Activated T-helper 1 cell treated with anti-CD3 and anti-CD28 coated beads, Interleukin-12 subunit alpha, Interleukin-12 subunit beta, Interleukin-2, Interleukin-4 antibody, amounts not matched to agents 30 ng/mL and 10 ng/mL and 1 ng/mL, durations not matched to agents 14 hours and 24 hours and 36 hours (primary cell): ENCODE measurements at regions of chr1 and their contacts with region 1.

Region 1: GRCh38 chr1:65393347-65393746 is 27.1 kb upstream of the LEPR start:
- DNase-seq: peak; percentile 30
- H3K4me3 Mint-ChIP-seq: peak overlapping the region; percentile 35
- H3K27ac Mint-ChIP-seq: peak overlapping the region; percentile 70
- H3K4me1 Mint-ChIP-seq: peaks cover 96% of the 10 kb centered on the region
- H3K27me3 Mint-ChIP-seq: no peaks in the 10 kb centered on the region

Region 2: DNA sequence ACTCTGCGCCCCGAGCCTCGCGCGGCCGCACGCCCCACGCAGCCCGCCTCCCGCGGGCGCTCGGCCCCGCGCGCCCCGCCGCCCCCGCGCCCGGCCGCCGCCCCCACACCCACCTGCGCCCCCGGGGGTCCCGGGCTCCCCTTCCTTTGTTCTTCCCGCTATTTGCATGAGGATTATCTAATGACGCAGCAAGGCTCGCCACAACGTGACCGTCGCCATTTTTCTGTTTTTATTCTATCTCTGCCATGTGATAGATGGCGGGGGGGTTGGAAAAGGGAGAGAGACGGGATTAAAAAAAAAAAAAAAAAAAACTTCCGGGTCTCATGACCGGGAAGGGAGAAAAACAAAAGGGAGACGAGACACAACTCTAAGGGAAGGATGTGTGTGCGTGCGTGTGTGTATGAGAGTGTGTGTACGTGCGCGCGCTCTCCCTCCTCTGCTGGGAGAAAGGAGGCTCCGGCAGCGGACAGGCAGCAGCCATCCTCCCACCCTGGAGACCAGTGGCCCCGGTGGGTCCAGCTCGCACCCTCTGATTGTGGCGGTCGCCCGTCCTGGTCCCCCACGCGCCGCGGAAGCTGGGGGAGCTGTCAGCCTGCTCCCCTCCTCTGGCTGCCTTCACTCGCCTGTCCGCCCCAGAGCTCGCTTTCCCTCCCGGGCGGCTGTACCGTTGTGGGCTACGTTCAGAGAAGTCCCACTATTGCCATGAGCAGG is 325.7 kb before region 1 on chr1:
- intact Hi-C with region 1: loop called (anchors 10 kb)
- DNase-seq: peak; percentile 25
- H3K4me3 Mint-ChIP-seq: peak overlapping the region; percentile 89
- H3K27ac Mint-ChIP-seq: peak overlapping the region; percentile 95
- H3K4me1 Mint-ChIP-seq: peaks cover 41% of the 10 kb centered on the region
- H3K27me3 Mint-ChIP-seq: no peaks in the 10 kb centered on the region

Region 3: GRCh38 chr1:65230731-65231481 is 162.4 kb before region 1 on chr1:
- intact Hi-C with region 1: loop called (anchors 1 kb)
- DNase-seq: no peak
- H3K4me3 Mint-ChIP-seq: no peak overlapping the region
- H3K27ac Mint-ChIP-seq: peak overlapping the region; percentile 81
- H3K4me1 Mint-ChIP-seq: peaks cover 32% of the 10 kb centered on the region
- H3K27me3 Mint-ChIP-seq: no peaks in the 10 kb centered on the region

Region 4: DNA sequence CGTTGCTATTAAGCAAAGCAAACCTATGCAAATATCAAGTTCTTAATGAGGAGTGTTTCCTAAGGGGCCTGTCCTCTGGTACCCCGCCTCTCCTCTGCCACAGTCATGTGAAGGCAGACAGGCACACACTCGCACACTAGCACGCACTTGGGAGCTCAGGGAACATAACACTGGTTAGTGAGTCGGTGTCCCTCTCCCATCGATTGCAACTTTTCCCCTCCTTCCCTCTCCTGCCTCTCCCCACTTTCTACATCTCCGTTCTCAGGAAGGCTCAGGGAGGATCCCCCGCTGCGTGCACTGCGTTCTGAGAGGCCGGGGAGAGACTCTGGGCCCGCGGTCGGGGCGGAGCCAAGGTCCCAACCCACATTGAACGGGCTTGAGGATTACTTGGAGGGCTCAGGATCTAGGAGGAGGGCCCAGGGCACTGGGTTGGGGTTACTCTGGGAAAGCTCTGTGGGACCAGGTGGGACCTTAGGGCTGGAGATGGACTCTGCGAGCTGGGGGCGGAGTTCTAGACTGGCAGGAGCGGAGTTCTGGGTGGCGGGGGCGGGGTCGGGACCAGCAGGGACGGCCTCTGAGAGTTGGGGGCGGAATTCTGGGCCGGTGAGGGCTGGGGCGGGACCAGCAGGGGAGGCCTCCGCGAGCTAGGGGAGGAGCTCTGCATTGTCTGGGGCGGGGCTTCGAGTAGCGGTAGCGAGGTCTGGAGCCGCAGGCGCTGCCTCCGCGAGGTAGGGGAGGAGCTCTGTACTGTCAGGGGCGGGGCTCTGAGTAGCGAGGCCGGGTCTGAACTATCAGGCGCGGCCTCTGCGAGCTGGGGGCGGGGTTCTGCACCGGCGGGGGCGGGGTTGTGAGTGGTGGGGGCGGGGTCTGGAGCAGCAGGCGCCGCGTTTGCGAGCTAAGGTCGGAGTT is 26.6 kb after region 1 on chr1:
- intact Hi-C with region 1: loop called (anchors 1 kb)
- DNase-seq: peak; percentile 98
- H3K4me3 Mint-ChIP-seq: no peak overlapping the region
- H3K27ac Mint-ChIP-seq: peak overlapping the region; percentile 90
- H3K4me1 Mint-ChIP-seq: peaks cover 32% of the 10 kb centered on the region
- H3K27me3 Mint-ChIP-seq: peaks cover 5% of the 10 kb centered on the region

Region 5: DNA sequence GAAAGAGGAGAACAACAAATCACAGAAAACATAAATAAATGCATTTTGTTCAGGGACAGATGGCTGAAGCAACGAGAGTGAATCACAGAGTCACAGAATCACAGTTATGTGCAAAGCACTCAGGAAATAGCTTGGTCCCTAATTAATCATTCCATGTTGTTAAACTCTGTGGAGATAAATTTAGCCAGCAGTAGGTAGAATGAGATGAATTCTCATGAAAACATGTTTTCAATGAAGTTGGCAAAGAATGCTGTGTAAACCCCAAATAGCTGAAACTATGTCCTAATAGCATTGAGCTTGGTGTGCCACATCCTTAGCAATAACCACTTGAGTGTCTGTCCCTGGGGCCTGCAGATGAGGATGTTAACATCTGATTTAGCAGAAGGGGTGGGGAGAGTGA is 47.6 kb after region 1 on chr1:
- intact Hi-C with region 1: no loop called
- DNase-seq: no peak
- H3K4me3 Mint-ChIP-seq: no peak overlapping the region
- H3K27ac Mint-ChIP-seq: no peak overlapping the region
- H3K4me1 Mint-ChIP-seq: no peaks in the 10 kb centered on the region
- H3K27me3 Mint-ChIP-seq: no peaks in the 10 kb centered on the region

Region 6: DNA sequence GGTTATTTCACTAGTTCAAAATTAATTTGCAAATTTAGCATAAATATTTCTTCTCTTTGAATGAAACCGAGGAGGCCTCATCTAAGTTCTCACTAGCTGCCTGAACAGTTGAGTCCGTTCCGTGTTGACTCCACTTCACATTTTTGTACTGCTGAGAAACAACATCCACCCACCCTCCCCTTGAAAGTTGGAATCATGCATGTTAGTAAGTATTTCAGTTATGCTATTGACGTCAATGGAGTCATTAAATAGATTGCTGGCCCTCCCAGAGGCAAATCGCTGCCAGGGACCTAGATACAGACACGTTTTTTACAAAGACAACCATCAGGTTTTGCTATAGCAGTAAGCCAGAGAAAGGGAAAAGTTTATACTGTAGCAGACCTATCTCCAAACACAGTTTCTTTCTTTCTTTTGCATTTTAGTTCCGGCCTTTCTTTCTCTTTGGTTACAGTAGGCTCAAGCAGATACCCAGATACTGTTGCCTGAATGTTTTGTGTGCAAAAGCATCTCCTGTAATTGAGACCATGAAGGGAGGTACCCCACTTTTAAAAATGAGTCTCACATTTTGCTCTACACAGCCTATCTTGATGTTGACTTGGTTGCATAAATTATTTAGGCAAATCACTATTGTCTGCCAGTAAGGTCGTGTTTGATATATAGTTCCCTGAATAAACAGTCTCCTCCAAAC is 878.0 kb after region 1 on chr1:
- intact Hi-C with region 1: loop called (anchors 10 kb)
- DNase-seq: no peak
- H3K4me3 Mint-ChIP-seq: peak overlapping the region; percentile 38
- H3K27ac Mint-ChIP-seq: peak overlapping the region; percentile 85
- H3K4me1 Mint-ChIP-seq: peaks cover 67% of the 10 kb centered on the region
- H3K27me3 Mint-ChIP-seq: peaks cover 2% of the 10 kb centered on the region

Region 7: DNA sequence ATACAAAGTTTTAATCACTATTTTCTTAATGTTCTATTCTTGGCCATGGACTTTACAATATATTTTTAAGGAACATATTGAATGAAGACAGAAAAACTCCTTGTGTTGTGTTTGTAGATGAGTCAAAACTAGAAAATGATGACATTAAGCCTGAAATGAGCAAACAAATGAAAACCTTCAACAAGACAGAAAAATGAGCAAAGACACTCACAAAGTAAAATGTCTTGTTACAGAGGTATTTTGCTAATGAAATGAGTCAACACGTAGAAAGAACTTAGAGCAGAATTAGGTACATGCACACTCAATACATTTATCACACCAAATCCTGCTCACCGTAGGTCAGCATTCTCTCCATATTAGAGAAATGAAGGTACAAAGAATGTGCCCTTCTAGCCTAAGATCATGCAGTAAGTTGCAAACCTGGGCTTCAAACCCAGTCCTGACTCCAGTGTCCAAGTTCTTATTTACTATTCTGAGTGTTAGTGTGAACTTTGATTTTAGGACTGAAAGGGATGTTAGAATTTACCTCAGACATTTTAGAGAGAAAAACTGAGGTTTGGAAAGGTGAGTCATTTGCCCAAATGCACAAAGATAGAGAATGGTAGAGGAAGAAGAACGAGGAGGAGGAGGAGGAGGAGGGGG is 1006.7 kb after region 1 on chr1:
- intact Hi-C with region 1: loop called (anchors 1 kb)
- DNase-seq: no peak
- H3K4me3 Mint-ChIP-seq: peak overlapping the region; percentile 67
- H3K27ac Mint-ChIP-seq: peak overlapping the region; percentile 88
- H3K4me1 Mint-ChIP-seq: peaks cover 47% of the 10 kb centered on the region
- H3K27me3 Mint-ChIP-seq: no peaks in the 10 kb centered on the region

Region 8: GRCh38 chr1:67174716-67175284 is 1781.5 kb after region 1 on chr1:
- intact Hi-C with region 1: loop called (anchors 10 kb)
- DNase-seq: no peak
- H3K4me3 Mint-ChIP-seq: peak overlapping the region; percentile 76
- H3K27ac Mint-ChIP-seq: peak overlapping the region; percentile 98
- H3K4me1 Mint-ChIP-seq: peaks cover 68% of the 10 kb centered on the region
- H3K27me3 Mint-ChIP-seq: no peaks in the 10 kb centered on the region